CD8-positive, alpha-beta T cell (primary cell): ENCODE measurements at regions of chr12 and their contacts with region 1.

Region 1: GRCh38 chr12:53005986-53006809 is at the start of gene EIF4B:
- DNase-seq: peak; percentile 99 to 100 (median 99)
- ATAC-seq: peak; percentile 89
- H3K4me3 ChIP-seq: peak within 1 kb of the TSS; percentile 93 to 99
- H3K4me3 Mint-ChIP-seq: peak within 1 kb of the TSS; percentile 100
- H3K27ac ChIP-seq: peak within 1 kb of the TSS; percentile 80 to 97
- H3K27ac Mint-ChIP-seq: peak within 1 kb of the TSS; percentile 98
- H3K4me1 ChIP-seq: peaks cover 44% of the 10 kb centered on the region
- H3K4me1 Mint-ChIP-seq: peaks cover 48% of the 10 kb centered on the region
- H3K27me3 ChIP-seq: peaks cover 0 to 2% of the 10 kb centered on the region in 2 experiments
- H3K27me3 Mint-ChIP-seq: peaks cover 3% of the 10 kb centered on the region
- CTCF ChIP-seq: no peak
- total RNA-seq, gene EIF4B: 709 to 741 TPM

Region 2: DNA sequence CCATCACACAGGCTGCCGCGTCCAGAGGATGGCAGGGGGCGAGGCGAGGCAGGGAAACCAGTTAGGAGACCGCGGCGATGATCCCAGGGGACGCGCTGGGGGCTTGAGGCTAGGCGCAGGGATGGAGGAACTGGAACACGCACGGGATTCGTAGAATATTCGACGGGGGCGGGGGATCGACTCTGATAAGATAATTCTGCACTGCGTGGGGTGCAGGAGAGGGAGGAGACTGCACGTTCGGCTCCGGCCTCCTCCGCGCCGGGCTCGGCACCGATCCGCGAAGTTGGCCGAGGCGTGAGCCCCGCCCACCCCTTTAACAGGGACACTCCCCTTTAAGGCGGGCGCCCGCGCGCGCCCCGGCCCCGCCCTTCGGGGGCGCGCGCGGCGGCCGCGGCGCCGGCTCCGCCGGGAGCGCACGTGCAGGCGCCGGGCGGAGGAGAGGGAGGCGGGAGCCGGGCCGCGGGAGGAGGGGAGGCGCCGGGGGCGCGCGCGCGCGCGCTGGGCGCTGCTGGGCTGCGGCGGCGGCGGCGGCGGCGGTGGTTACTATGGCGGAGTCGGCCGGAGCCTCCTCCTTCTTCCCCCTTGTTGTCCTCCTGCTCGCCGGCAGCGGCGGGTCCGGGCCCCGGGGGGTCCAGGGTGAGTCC is 1054.9 kb before region 1 on chr12 and contains the start of gene ACVR1B:
- CTCF ChIA-PET with region 1: no interaction called
- POLR2A ChIA-PET with region 1: no interaction called
- intact Hi-C with region 1: loop called (anchors 10 kb)
- DNase-seq: peak; percentile 84 to 95 (median 91)
- ATAC-seq: peak; percentile 95
- H3K4me3 ChIP-seq: peak within 1 kb of the TSS; percentile 76 to 93
- H3K4me3 Mint-ChIP-seq: peak within 1 kb of the TSS; percentile 98
- H3K27ac ChIP-seq: peak within 1 kb of the TSS; percentile 44 to 69
- H3K27ac Mint-ChIP-seq: peak within 1 kb of the TSS; percentile 91
- H3K4me1 ChIP-seq: peaks cover 38% of the 10 kb centered on the region
- H3K4me1 Mint-ChIP-seq: peaks cover 42% of the 10 kb centered on the region
- H3K27me3 ChIP-seq: no peaks in the 10 kb centered on the region
- H3K27me3 Mint-ChIP-seq: no peaks in the 10 kb centered on the region
- CTCF ChIP-seq: no peak
- total RNA-seq, gene ACVR1B: 12.0 to 13.7 TPM

Region 3: GRCh38 chr12:53079226-53080117 is 73.3 kb after region 1 on chr12 and contains the start of gene SPRYD3:
- CTCF ChIA-PET with region 1: no interaction called
- POLR2A ChIA-PET with region 1: interaction called, 5 read pairs
- intact Hi-C with region 1: loop called in 1 of 2 experiments (anchors 1 kb)
- DNase-seq: peak; percentile 95 to 98 (median 96)
- ATAC-seq: peak; percentile 94
- H3K4me3 ChIP-seq: peak within 1 kb of the TSS; percentile 66 to 92
- H3K4me3 Mint-ChIP-seq: peak within 1 kb of the TSS; percentile 92
- H3K27ac ChIP-seq: peak within 1 kb of the TSS; percentile 75 to 89
- H3K27ac Mint-ChIP-seq: peak within 1 kb of the TSS; percentile 96
- H3K4me1 ChIP-seq: peaks cover 13% of the 10 kb centered on the region
- H3K4me1 Mint-ChIP-seq: peaks cover 41% of the 10 kb centered on the region
- H3K27me3 ChIP-seq: no peaks in the 10 kb centered on the region
- H3K27me3 Mint-ChIP-seq: no peaks in the 10 kb centered on the region
- CTCF ChIP-seq: no peak
- total RNA-seq, gene SPRYD3: 25.1 to 25.6 TPM

Region 4: GRCh38 chr12:53451661-53452158 is 445.5 kb after region 1 on chr12 and contains the start of gene PCBP2:
- CTCF ChIA-PET with region 1: no interaction called
- POLR2A ChIA-PET with region 1: no interaction called
- intact Hi-C with region 1: loop called in 1 of 2 experiments (anchors 2 kb)
- DNase-seq: peak; percentile 94 to 99 (median 98)
- ATAC-seq: peak; percentile 93
- H3K4me3 ChIP-seq: peak within 1 kb of the TSS; percentile 81 to 88
- H3K4me3 Mint-ChIP-seq: peak within 1 kb of the TSS; percentile 99
- H3K27ac ChIP-seq: peak within 1 kb of the TSS; percentile 80 to 95
- H3K27ac Mint-ChIP-seq: peak within 1 kb of the TSS; percentile 99
- H3K4me1 ChIP-seq: peaks cover 27% of the 10 kb centered on the region
- H3K4me1 Mint-ChIP-seq: peaks cover 43% of the 10 kb centered on the region
- H3K27me3 ChIP-seq: no peaks in the 10 kb centered on the region
- H3K27me3 Mint-ChIP-seq: no peaks in the 10 kb centered on the region
- CTCF ChIP-seq: peak; percentile 94
- total RNA-seq, gene PCBP2: 1,250 to 1,255 TPM

Region 5: GRCh38 chr12:53575502-53576253 is 569.5 kb after region 1 on chr12:
- CTCF ChIA-PET with region 1: no interaction called
- POLR2A ChIA-PET with region 1: no interaction called
- intact Hi-C with region 1: no loop called
- DNase-seq: peak in 1 of 9 experiments; percentile 27
- ATAC-seq: no peak
- H3K4me3 ChIP-seq: no peak overlapping the region
- H3K4me3 Mint-ChIP-seq: no peak overlapping the region
- H3K27ac ChIP-seq: no peak overlapping the region
- H3K27ac Mint-ChIP-seq: no peak overlapping the region
- H3K4me1 ChIP-seq: peaks cover 11% of the 10 kb centered on the region
- H3K4me1 Mint-ChIP-seq: peaks cover 20% of the 10 kb centered on the region
- H3K27me3 ChIP-seq: no peaks in the 10 kb centered on the region
- H3K27me3 Mint-ChIP-seq: no peaks in the 10 kb centered on the region
- CTCF ChIP-seq: no peak

Region 6: DNA sequence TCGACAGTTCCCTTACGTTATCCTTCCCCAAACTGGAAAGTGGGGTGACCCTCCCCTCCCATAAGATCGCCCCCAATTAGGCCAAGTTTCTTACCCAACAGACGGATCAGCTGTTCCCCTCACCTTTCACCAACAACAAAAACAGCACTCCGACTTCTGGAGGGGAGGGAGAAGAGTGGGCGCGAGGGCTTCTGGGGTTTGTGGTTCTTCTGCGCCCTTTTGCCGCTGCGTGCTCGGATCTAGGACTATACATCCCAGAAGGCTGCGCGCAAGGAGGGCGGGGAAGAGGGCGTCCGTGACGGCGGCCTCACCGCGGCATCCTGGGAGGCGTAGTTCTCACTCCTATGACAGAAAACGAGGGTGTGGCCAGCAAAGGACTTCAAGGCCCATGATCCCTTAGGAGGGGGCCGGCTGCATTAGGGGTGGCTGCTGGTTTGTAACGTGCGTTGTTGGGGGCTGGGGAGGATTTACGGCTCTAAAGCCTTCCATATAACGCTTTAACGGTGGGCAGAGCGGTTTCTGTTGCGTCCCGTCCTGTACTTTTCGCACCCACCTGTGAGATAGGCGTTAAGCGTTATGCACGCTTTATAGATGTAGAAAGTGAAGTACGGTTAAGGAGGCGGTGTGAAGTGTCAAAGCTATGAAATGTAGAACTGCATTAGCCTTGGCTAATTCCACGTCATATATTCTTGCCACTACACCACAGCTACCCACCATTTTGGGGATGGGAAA is 721.3 kb after region 1 on chr12 and contains the start of gene CALCOCO1:
- CTCF ChIA-PET with region 1: no interaction called
- POLR2A ChIA-PET with region 1: no interaction called
- intact Hi-C with region 1: loop called (anchors 2 kb)
- DNase-seq: peak; percentile 95 to 99 (median 97)
- ATAC-seq: peak; percentile 98
- H3K4me3 ChIP-seq: peak within 1 kb of the TSS; percentile 67 to 76
- H3K4me3 Mint-ChIP-seq: peak within 1 kb of the TSS; percentile 95
- H3K27ac ChIP-seq: peak within 1 kb of the TSS; percentile 65 to 72
- H3K27ac Mint-ChIP-seq: peak within 1 kb of the TSS; percentile 92
- H3K4me1 ChIP-seq: peaks cover 18% of the 10 kb centered on the region
- H3K4me1 Mint-ChIP-seq: peaks cover 30% of the 10 kb centered on the region
- H3K27me3 ChIP-seq: no peaks in the 10 kb centered on the region
- H3K27me3 Mint-ChIP-seq: no peaks in the 10 kb centered on the region
- CTCF ChIP-seq: no peak
- total RNA-seq, gene CALCOCO1: 49.2 to 49.5 TPM